Breast epithelium (tissue), 4 donors: ENCODE measurements at regions of chrX and their contacts with region 1.

Region 1: GRCh38 chrX:13888284-13888683 is 71.4 kb upstream of the GPM6B start:
- DNase-seq: no peak
- H3K4me3 ChIP-seq: no peak overlapping the region
- H3K27ac ChIP-seq: peak overlapping the region; percentile 51 to 73
- H3K4me1 ChIP-seq: no peaks in the 10 kb centered on the region
- H3K27me3 ChIP-seq: peaks cover 0 to 56% of the 10 kb centered on the region in 2 donors
- CTCF ChIP-seq: no peak
- POLR2A ChIP-seq: no peak

Region 2: DNA sequence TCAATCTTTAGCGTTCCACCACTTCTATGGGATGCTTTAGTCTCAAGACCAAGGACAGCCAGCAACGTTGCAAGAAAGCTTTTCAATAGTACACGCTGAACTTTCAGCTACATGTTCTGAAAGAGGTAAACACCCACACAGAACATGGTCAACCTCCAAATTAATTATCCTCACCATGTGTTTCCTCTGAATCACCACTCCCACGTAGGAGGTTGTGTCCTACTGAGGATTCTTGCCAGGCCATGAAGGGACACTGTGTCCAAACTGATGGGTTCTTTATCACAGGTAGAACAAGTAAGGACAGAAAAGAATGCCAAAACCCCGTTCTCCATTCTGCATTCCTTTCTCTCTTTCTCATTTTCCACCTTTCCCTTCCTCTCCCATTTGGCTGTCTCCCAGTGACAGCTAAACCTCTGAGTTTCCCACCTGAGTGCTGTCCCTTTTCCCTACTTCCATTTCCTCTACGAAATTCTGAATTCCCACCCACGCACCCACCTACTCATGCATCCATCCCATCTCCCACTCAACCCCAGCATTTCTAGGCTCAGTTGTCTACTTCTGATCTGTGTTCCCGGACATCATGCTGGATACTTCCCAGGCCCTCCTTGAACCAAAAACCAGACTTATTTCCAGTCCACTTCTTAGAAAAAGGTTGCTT is 42.4 kb before region 1 on chrX:
- intact Hi-C with region 1: no loop called
- DNase-seq: peak in 1 of 2 donors; percentile 82
- H3K4me3 ChIP-seq: no peak overlapping the region
- H3K27ac ChIP-seq: peak overlapping the region; percentile 31 to 38
- H3K4me1 ChIP-seq: no peaks in the 10 kb centered on the region
- H3K27me3 ChIP-seq: peaks cover 0 to 30% of the 10 kb centered on the region in 2 donors
- CTCF ChIP-seq: no peak
- POLR2A ChIP-seq: no peak

Region 3: DNA sequence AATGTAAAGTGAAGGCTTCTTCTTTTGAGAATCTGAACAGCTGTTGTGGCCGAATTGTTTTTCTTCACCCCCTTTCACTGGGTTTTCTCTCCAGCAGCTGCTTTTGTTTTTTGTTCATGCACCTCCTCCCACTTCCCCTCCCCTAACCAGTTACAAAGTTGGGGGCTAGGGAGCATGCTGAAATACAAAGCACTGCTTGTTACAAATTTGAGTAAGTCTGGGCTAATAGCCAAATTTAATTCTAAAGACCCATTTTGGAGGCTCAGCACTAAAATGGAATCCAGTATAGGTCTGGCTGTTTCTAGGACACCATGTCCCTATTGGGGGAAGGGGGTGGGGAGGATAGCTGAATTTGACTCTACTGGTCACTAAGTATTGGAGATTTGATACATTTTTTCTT is 17.8 kb after region 1 on chrX:
- intact Hi-C with region 1: loop called (anchors 1 kb)
- DNase-seq: no peak
- H3K4me3 ChIP-seq: no peak overlapping the region
- H3K27ac ChIP-seq: no peak overlapping the region
- H3K4me1 ChIP-seq: no peaks in the 10 kb centered on the region
- H3K27me3 ChIP-seq: peaks cover 0 to 41% of the 10 kb centered on the region in 2 donors
- CTCF ChIP-seq: no peak
- POLR2A ChIP-seq: no peak

Region 4: GRCh38 chrX:13923845-13924244 is 35.6 kb after region 1 on chrX:
- intact Hi-C with region 1: no loop called
- DNase-seq: peak in 1 of 2 donors; percentile 50
- H3K4me3 ChIP-seq: no peak overlapping the region
- H3K27ac ChIP-seq: no peak overlapping the region
- H3K4me1 ChIP-seq: no peaks in the 10 kb centered on the region
- H3K27me3 ChIP-seq: peaks cover 0 to 27% of the 10 kb centered on the region in 2 donors
- CTCF ChIP-seq: no peak
- POLR2A ChIP-seq: no peak